ENCODE measurements at regions of chr12 and their contacts with region 1.

Region 1: GRCh38 chr12:31651893-31652521 is 7.5 kb upstream of the ETFBKMT start:
- DNase-seq: no peak
- H3K4me3 Mint-ChIP-seq: no peak overlapping the region
- H3K27ac Mint-ChIP-seq: no peak overlapping the region
- H3K4me1 Mint-ChIP-seq: peaks cover 14% of the 10 kb centered on the region
- H3K27me3 Mint-ChIP-seq: no peaks in the 10 kb centered on the region

Region 2: DNA sequence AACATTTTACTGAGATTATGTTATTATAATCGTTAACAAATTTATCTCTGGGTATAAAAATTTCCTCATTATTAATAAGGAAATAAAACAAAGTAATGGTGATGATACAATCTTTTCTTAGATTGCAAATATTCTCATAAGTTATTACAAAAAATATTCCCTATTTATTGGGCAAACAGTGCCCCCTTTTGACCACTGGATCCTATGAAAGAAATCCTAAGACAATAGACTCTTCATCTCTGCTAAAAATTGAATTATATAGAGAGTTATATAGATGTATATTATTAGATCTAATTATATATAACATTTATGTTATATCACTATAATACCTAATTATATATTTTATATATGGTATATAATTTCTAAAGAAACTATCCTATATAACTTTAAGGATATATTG is 653.2 kb after region 1 on chr12:
- CTCF ChIA-PET with region 1: interaction called, 37 read pairs
- DNase-seq: no peak
- H3K4me3 Mint-ChIP-seq: no peak overlapping the region
- H3K27ac Mint-ChIP-seq: no peak overlapping the region
- H3K4me1 Mint-ChIP-seq: no peaks in the 10 kb centered on the region
- H3K27me3 Mint-ChIP-seq: no peaks in the 10 kb centered on the region

Region 3: GRCh38 chr12:32312049-32312670 is 660.2 kb after region 1 on chr12:
- CTCF ChIA-PET with region 1: interaction called, 37 read pairs
- DNase-seq: no peak
- H3K4me3 Mint-ChIP-seq: no peak overlapping the region
- H3K27ac Mint-ChIP-seq: no peak overlapping the region
- H3K4me1 Mint-ChIP-seq: peaks cover 4% of the 10 kb centered on the region
- H3K27me3 Mint-ChIP-seq: no peaks in the 10 kb centered on the region